ENCODE measurements at regions of chr22 and their contacts with region 1.

Region 1: GRCh38 chr22:39814899-39815298 is 78.7 kb downstream of the ENTHD1 start:
- DNase-seq: no peak
- ATAC-seq: no peak
- H3K4me3 ChIP-seq: no peak overlapping the region
- H3K27ac ChIP-seq: no peak overlapping the region
- H3K4me1 ChIP-seq: no peaks in the 10 kb centered on the region
- H3K27me3 ChIP-seq: peaks cover 0 to 61% (median 5%) of the 10 kb centered on the region in 3 donors
- CTCF ChIP-seq: no peak

Region 2: GRCh38 chr22:39559454-39560105 is 255.3 kb before region 1 on chr22:
- intact Hi-C with region 1: loop called in 1 of 2 experiments (anchors 10 kb)
- DNase-seq: no peak
- ATAC-seq: peak in 1 of 4 donors; percentile 37
- H3K4me3 ChIP-seq: no peak overlapping the region
- H3K27ac ChIP-seq: no peak overlapping the region
- H3K4me1 ChIP-seq: peaks cover 3% of the 10 kb centered on the region
- H3K27me3 ChIP-seq: peaks cover 0 to 65% (median 24%) of the 10 kb centered on the region in 3 donors
- CTCF ChIP-seq: no peak

Region 3: DNA sequence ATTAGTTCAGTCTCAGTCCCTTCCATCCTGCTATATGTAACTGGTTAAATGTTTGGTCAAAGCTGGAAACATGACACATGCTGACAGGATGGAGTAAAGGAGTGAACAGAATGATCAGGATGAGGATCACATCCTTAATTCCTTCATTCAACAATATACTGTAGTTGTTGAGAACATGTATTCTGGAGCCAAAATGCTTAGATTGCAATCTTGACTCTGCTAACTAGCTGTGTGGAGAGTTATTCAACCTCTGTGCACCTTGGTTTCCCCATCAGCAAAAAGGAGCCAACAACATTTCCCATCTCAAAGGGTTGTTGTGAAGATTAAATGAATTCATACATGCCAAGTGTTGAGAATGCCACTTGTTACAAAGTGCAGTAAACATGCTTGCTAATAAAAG is 65.8 kb after region 1 on chr22:
- intact Hi-C with region 1: no loop called
- DNase-seq: no peak
- ATAC-seq: no peak
- H3K4me3 ChIP-seq: no peak overlapping the region
- H3K27ac ChIP-seq: no peak overlapping the region
- H3K4me1 ChIP-seq: no peaks in the 10 kb centered on the region
- H3K27me3 ChIP-seq: peaks cover 0 to 14% (median 5%) of the 10 kb centered on the region in 3 donors
- CTCF ChIP-seq: no peak

Region 4: DNA sequence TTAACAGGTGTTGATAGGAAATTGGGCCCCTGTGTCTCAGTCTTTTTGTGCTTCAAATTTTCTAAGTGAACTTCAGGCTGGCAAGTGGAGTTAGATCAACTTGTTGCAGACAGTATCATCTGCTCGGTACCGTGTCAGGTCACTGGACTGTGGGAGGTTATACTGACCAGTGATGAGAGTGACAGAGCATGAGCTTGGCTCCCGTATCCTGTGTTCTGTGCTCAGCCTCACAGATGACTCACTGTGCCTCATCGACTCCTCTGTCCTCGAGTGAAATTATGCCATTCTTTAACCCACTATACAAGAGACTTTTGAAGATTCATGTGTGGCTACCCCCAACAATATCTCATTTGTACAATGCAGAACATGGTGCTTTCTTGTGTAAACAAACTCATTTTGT is 93.8 kb after region 1 on chr22:
- intact Hi-C with region 1: no loop called
- DNase-seq: no peak
- ATAC-seq: no peak
- H3K4me3 ChIP-seq: no peak overlapping the region
- H3K27ac ChIP-seq: no peak overlapping the region
- H3K4me1 ChIP-seq: no peaks in the 10 kb centered on the region
- H3K27me3 ChIP-seq: peaks cover 2 to 26% (median 7%) of the 10 kb centered on the region in 3 donors
- CTCF ChIP-seq: no peak

Measured in psoas muscle (tissue), 8 donors.